Sigmoid colon (tissue), 7 donors: ENCODE measurements at regions of chr12 and their contacts with region 1.

Region 1: GRCh38 chr12:116591855-116592637 is 32.9 kb downstream of the MAP1LC3B2 start:
- DNase-seq: no peak
- H3K4me3 ChIP-seq: no peak overlapping the region
- H3K27ac ChIP-seq: peak overlapping the region; percentile 48 to 79 (median 70)
- H3K4me1 ChIP-seq: peaks cover 0 to 22% (median 14%) of the 10 kb centered on the region in 4 donors
- H3K27me3 ChIP-seq: no peaks in the 10 kb centered on the region
- CTCF ChIP-seq: no peak
- EP300 ChIP-seq: peak in 2 of 4 donors; percentile 19 to 51
- POLR2A ChIP-seq: no peak

Region 2: DNA sequence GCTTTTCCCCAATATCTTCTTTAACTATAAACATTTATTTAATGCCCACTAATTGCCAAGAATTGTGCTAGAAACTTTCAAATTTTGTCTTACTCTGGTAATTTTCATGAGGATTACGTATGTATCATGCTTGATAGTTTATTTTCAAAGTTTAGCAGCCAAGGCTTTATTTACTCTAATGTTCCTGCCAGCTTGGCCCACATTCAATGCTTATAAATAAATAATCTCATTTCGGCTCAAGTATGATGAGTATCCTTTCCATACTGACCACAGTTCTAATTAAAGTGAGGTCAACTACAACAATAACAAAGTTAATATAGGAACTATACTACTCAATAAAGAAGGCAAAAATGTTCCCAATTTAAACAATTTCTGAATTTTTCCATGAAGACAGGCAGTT is 573.8 kb before region 1 on chr12:
- intact Hi-C with region 1: no loop called
- DNase-seq: no peak
- H3K4me3 ChIP-seq: no peak overlapping the region
- H3K27ac ChIP-seq: no peak overlapping the region
- H3K4me1 ChIP-seq: peaks cover 0 to 16% (median 4%) of the 10 kb centered on the region in 4 donors
- H3K27me3 ChIP-seq: no peaks in the 10 kb centered on the region
- CTCF ChIP-seq: no peak
- EP300 ChIP-seq: no peak
- POLR2A ChIP-seq: no peak

Region 3: DNA sequence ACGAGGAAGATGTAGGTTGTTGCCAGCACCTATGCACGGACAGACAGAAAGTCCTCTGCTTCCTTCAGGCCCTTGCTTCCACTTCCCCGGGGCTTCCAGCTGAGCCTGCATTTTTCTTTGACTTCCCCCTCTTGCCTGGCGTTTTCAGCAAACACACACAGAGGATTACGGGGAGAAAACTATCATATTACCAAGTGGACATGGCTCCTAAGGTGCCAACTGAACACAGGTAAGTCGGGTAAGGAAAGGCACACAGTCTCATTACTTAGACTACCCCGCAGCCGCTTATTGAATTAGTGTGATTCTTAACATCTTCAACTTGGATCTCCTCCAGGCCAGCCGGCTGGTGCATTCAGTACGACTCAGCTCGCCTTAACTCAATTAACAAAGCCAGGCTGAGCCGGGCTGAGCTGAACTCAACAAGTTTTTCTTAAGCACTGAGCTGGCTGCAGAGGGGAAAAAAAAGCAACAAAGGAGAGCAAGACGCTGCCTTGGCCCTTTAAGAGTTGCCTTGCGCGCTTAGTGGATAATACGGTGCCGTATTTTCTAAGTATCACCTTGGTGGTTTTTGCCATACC is 52.1 kb before region 1 on chr12:
- intact Hi-C with region 1: loop called (anchors 5 kb)
- DNase-seq: peak; percentile 81
- H3K4me3 ChIP-seq: no peak overlapping the region
- H3K27ac ChIP-seq: peak overlapping the region; percentile 15 to 58 (median 46)
- H3K4me1 ChIP-seq: peaks cover 0 to 33% (median 28%) of the 10 kb centered on the region in 4 donors
- H3K27me3 ChIP-seq: no peaks in the 10 kb centered on the region
- CTCF ChIP-seq: no peak
- EP300 ChIP-seq: no peak
- POLR2A ChIP-seq: no peak

Region 4: DNA sequence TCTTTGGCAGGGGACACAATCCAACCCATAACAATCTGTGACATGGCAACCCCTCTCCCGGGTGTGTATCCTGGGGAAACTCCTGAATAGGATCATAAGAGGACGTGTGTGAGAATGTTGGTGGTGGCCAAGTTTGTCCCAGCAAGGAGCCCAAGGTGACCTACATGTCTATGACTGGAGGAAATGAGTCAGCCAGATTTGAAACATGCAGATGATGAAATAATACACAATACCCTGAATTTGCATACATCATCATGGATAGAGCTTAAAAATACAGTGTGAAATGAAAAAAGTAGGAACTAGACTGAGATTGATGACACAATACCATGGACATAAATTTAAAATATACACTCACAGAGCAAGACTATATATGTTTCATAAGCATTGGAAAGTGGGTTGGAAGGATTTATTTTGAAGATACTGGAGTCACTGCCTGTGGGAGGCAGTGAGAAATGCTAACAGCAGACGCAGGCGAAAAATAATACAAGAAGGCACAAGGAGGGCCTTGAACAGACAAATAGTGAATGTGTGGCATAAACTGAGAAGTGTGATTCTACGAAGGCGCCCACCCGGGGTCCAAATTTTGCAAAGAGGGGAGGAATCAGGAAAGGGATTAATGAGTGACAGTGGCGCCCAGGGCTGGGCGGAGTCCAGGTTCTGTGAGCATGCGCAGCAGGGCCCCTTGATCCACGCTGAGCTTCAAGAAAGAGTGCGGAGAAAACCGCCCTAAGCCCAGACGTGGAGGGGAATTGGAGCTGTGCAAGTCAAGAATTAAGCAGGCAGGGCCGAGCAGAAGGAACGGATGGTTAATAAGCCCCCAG is 39.9 kb before region 1 on chr12:
- intact Hi-C with region 1: loop called (anchors 5 kb)
- DNase-seq: no peak
- H3K4me3 ChIP-seq: no peak overlapping the region
- H3K27ac ChIP-seq: no peak overlapping the region
- H3K4me1 ChIP-seq: peaks cover 0 to 11% (median 3%) of the 10 kb centered on the region in 4 donors
- H3K27me3 ChIP-seq: no peaks in the 10 kb centered on the region
- CTCF ChIP-seq: no peak
- EP300 ChIP-seq: no peak
- POLR2A ChIP-seq: no peak

Region 5: DNA sequence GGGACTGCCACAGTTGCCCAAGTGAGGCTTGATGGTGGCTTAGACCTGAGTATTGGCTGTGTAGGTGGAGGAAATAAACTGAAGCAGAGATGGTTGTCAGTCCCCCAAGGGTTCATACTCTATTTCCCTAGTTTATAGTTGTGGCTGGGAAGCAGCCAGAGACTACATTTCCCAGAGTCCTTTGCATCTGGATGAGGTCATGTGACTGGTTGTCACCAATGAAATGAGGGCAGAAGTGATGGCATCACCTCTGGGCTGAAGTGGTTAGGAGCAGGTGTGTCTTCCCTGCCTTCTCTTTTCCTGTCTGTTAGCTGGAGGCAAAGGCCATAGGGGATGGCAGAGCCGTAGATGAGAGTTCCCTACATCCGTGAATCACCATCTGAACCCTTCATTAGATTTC is 785.7 kb after region 1 on chr12:
- intact Hi-C with region 1: no loop called
- DNase-seq: no peak
- H3K4me3 ChIP-seq: no peak overlapping the region
- H3K27ac ChIP-seq: no peak overlapping the region
- H3K4me1 ChIP-seq: no peaks in the 10 kb centered on the region
- H3K27me3 ChIP-seq: no peaks in the 10 kb centered on the region
- CTCF ChIP-seq: no peak
- EP300 ChIP-seq: no peak
- POLR2A ChIP-seq: no peak